Common myeloid progenitor, CD34-positive (primary cell): ENCODE measurements at regions of chr17 and their contacts with region 1.

Region 1: DNA sequence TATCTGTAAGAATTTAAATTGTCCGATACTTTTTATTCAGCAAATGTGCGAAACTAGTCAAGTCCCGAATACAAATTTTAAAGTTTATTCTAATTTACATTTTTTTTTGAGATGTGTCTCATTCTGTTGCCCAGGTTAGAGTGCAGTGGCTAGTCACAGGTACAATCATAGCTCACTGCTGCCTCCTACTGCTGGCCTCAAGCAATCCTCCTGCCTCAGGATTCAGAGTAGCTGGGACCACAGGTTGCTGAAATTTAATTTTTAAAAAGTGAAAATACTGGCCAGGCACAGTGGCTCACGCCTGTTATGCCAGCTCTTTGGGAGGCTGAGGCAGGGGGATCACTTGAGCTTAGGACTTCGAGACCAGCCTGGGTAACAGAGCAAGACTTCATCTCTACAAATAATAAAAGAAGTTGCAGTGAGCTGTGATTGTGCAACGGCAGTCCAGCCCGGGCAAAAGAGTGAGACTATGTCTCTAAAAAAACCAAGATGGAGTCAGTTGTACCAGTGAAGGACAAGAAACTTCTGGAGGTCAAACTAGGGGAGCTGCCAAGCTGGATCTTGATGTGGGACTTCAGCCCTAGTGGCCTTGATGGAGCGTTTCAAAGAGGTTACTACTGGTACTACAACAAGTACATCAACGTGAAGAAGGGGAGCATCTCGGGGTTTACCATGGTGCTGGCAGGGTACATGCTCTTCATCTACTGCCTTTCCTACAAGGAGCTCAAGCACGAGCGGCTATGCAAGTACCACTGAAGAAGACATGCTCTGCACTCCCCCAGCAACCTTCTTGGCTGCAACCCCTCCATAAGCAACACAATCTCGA is 5.6 kb downstream of the POLG2 start:
- DNase-seq: peak; percentile 60 to 85 (median 79)
- H3K4me3 ChIP-seq: no peak overlapping the region
- H3K27ac ChIP-seq: no peak overlapping the region
- H3K4me1 ChIP-seq: peaks cover 9 to 26% (median 19%) of the 10 kb centered on the region in 4 experiments
- H3K27me3 ChIP-seq: no peaks in the 10 kb centered on the region

Region 2: GRCh38 chr17:64411999-64412771 is 79.1 kb before region 1 on chr17:
- CTCF ChIA-PET with region 1: interaction called, 261 read pairs
- POLR2A ChIA-PET with region 1: no interaction called
- DNase-seq: peak; percentile 64 to 91 (median 86)
- H3K4me3 ChIP-seq: peak overlapping the region; percentile 2 to 73 (median 49)
- H3K27ac ChIP-seq: peak overlapping the region; percentile 4 to 77
- H3K4me1 ChIP-seq: peaks cover 13 to 46% (median 39%) of the 10 kb centered on the region in 4 experiments
- H3K27me3 ChIP-seq: no peaks in the 10 kb centered on the region

Region 3: DNA sequence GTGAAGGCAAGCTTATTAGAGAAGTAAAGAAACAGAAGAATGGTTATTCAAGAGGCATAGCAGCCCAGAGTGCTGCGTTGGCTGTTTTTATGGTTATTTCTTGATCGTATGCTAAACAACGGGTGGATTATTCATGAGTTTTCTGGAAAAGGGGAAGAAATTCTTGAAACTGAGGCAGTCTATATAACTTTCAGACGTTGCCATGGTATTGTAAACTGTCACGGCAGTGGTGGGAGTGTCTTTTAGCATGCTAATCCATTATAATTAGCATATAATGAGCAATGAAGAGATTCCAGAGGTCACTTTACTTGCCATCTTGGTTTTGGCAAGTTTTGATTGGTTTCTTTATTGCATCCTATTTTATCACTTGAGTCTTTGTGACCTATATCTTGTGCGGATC is 59.7 kb before region 1 on chr17:
- CTCF ChIA-PET with region 1: interaction called, 261 read pairs
- POLR2A ChIA-PET with region 1: no interaction called
- DNase-seq: no peak
- H3K4me3 ChIP-seq: no peak overlapping the region
- H3K27ac ChIP-seq: no peak overlapping the region
- H3K4me1 ChIP-seq: no peaks in the 10 kb centered on the region
- H3K27me3 ChIP-seq: no peaks in the 10 kb centered on the region

Region 4: GRCh38 chr17:64448665-64449512 is 42.4 kb before region 1 on chr17 and contains the start of gene MILR1:
- CTCF ChIA-PET with region 1: interaction called, 10 read pairs
- POLR2A ChIA-PET with region 1: no interaction called
- DNase-seq: peak; percentile 97 to 99 (median 98)
- H3K4me3 ChIP-seq: peak within 1 kb of the TSS in 6 of 7 experiments; percentile 2 to 66 (median 50)
- H3K27ac ChIP-seq: peak within 1 kb of the TSS; percentile 35 to 79
- H3K4me1 ChIP-seq: peaks cover 11 to 49% (median 40%) of the 10 kb centered on the region in 4 experiments
- H3K27me3 ChIP-seq: no peaks in the 10 kb centered on the region

Region 5: DNA sequence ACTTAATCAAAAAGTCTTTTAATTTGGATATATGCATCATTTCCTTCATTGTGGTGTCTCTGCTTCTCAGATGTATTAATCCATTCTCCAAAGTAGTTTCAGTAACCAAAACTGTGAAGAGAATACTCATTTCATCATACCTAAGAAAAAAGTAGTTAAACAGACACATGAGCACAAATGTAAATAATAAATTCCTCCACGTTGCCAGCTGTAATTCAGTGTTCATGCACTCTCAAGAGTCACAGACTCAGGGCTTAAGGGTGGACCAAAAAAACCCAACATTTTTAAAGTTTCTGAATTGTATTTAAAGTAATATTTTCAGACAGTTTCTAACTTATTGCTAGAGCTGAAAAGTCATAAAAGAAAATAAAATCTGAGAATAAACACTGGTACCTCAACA is 13.4 kb before region 1 on chr17:
- CTCF ChIA-PET with region 1: interaction called, 14 read pairs
- POLR2A ChIA-PET with region 1: interaction called, 7 read pairs
- DNase-seq: no peak
- H3K4me3 ChIP-seq: no peak overlapping the region
- H3K27ac ChIP-seq: no peak overlapping the region
- H3K4me1 ChIP-seq: no peaks in the 10 kb centered on the region
- H3K27me3 ChIP-seq: no peaks in the 10 kb centered on the region